ENCODE measurements at regions of chr3 and their contacts with region 1.

Region 1: GRCh38 chr3:52278510-52279069 is at the start of gene WDR82:
- DNase-seq: peak; percentile 96
- CTCF ChIP-seq: no peak

Region 2: DNA sequence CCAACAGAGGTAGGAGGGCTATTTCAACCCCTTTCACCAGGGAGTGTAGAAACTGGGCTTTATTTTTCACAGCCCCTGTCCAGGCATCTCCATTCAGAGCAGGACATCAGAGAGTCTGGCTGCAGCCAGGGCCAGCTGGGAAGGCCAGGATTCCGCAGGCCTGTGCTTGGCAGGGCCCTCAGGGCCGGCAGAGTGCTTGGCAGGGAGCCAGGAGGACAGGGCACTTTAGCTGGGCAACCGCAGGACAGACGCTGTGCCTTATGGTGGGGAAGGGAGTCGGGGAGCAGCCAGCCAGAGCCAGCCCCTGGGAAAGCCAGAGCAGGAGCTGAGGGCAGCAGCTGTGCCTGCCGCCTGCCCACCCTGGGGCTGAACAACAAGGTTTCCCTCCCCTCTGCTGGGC is 465.1 kb before region 1 on chr3:
- CTCF ChIA-PET with region 1: no interaction called
- POLR2A ChIA-PET with region 1: no interaction called
- DNase-seq: no peak
- CTCF ChIP-seq: no peak

Region 3: GRCh38 chr3:51937014-51937413 is 341.6 kb before region 1 on chr3:
- CTCF ChIA-PET with region 1: no interaction called
- POLR2A ChIA-PET with region 1: no interaction called
- DNase-seq: peak; percentile 5
- CTCF ChIP-seq: no peak

Region 4: DNA sequence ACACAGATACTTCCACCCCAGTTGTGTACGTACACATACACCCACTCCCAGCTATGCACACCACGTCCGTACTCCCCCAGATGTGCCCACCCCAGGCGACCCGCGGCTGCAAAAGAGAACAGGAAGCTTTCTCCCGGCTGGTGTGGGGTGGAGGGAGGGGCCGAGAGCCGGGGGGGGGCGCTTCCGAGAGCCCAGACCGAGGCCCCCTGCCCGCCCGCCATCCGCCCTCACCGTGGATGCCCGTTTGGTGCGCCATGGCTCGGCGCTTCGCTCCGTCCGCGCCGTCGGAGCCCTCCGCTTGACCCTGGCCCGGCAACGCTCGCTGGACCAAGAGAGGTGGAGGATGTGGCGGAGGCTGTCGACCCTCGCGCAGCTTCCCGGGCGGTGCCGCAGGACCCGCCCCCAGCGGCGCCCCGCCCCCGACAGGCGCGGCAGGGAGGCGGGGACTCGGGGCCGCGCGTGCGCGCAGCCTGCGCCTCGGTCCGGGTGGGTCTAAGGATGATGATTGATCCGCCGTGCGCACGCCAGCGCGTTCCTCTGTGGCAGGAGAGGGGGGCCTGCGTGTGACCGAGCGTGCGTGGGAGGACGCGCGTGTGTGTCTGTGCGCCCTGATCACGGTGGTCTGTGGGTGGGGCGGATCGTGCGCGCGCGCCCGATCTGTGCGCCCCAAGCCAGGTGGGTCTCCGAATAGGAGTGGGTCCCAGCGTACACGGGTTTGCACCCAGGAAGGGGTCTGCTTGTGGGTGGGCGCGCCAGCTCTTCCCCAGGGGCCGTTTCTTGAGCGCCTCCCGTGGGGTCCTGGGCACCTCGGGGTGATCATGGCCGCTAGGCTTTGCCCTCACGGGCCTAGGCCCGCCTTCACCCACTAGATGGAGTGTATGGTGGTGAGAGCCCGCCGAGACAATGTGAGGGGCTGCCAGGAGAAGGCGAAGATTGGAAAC is 39.6 kb before region 1 on chr3 and contains the start of gene TWF2:
- CTCF ChIA-PET with region 1: interaction called, 13 read pairs
- POLR2A ChIA-PET with region 1: interaction called, 5 read pairs
- DNase-seq: peak; percentile 97
- CTCF ChIP-seq: peak; percentile 44

Region 5: GRCh38 chr3:52245322-52246263 is 33.0 kb before region 1 on chr3 and contains the start of gene PPM1M:
- CTCF ChIA-PET with region 1: interaction called, 10 read pairs
- POLR2A ChIA-PET with region 1: interaction called, 5 read pairs
- DNase-seq: peak; percentile 72
- CTCF ChIP-seq: no peak

Region 6: DNA sequence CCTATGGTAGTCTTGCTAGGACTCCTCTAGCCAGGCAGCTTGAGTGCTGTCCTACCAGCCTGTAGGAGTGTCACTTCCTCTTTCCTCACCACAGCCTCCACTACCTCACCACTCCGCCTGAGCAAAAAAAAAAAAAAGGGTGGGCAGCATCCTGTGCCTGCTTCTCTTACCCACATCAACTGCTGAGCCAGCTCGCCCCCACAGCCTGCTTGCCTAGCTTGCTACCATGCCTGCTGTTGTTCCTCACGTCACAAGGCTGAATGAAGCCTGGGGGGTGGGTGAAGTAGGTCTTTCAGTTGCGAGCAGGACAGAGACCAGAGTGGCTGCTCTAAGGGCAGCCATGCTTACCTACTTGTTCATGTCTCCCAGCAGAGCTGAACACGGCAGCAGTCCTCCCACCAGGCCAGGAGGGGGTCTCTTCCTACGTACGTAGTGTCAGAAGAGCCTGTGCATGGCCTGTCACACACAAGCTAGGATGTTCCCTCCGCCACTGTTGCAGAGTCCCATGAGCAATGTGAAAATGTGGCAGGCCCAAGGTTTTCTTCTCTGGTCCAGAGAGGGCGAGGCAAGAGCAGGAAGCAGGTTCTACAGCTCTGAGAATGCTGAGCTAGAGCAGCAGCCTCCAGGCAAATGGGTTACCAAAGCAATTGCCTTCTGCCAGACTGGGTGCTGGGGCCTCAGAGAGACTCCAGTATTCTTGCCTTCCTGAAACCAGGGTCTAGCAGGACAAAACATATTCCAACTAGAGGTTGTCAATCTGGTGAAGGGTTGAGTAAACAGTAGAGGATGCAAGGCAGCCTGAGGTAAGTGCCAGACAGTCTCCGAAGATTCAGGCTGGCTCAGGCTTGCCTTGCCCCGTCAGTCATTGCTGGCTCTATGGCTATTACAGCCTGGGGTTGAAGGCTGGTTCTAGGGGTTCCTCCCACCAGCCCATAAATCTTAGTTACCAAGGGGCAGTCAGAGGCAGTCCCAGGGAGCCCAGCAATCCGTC is 25.0 kb before region 1 on chr3:
- CTCF ChIA-PET with region 1: interaction called, 15 read pairs
- POLR2A ChIA-PET with region 1: interaction called, 5 read pairs
- DNase-seq: peak; percentile 91
- CTCF ChIP-seq: no peak

Region 7: GRCh38 chr3:52291508-52292181 is 13.1 kb after region 1 on chr3:
- CTCF ChIA-PET with region 1: interaction called, 16 read pairs
- POLR2A ChIA-PET with region 1: interaction called, 6 read pairs
- DNase-seq: peak; percentile 76
- CTCF ChIP-seq: peak; percentile 64

Region 8: DNA sequence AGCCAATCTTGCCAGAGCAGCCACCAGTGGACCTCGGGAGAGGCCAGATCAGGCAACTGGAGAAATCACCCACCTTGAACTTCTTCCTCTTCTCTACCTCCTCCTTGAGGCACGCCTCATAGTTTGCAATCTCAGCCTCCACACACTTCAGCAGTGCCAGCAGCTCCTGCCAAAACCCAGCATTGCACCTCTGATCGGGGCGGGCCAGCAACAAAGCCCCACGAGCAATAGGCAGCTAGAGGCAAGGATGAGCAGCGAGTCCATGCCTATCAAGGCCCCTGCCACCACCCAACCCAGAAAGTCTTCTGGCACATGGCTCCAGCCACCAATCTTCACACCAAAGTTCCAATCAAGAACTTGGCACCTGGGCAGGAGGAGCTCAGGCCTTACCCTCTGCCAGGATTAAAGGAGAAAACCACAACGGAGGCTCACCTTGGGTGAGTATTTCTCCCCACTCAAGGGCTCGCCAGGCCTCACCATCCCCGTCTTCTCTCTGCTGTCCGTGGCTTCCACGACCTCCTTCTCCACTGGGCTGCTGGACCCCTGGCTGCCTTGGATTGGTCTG is 124.2 kb after region 1 on chr3:
- CTCF ChIA-PET with region 1: no interaction called
- POLR2A ChIA-PET with region 1: no interaction called
- DNase-seq: no peak
- CTCF ChIP-seq: no peak